Mammary epithelial cell (primary cell): ENCODE measurements at regions of chr21 and their contacts with region 1.

Region 1: GRCh38 chr21:28336314-28336713 is 656.4 kb downstream of the LTN1 start:
- DNase-seq: peak; percentile 29
- H3K4me3 ChIP-seq: no peak overlapping the region
- H3K27ac ChIP-seq: no peak overlapping the region
- H3K4me1 ChIP-seq: no peaks in the 10 kb centered on the region
- H3K27me3 ChIP-seq: no peaks in the 10 kb centered on the region
- CTCF ChIP-seq: peak; percentile 46 to 51

Region 2: GRCh38 chr21:26842976-26843932 is 1493.1 kb before region 1 on chr21:
- CTCF ChIA-PET with region 1: no interaction called
- dilution Hi-C with region 1: no loop called
- in situ Hi-C with region 1: loop called in 1 of 2 experiments (anchors 10 kb)
- intact Hi-C with region 1: no loop called
- DNase-seq: peak; percentile 91
- H3K4me3 ChIP-seq: peak overlapping the region; percentile 70 to 85 (median 74)
- H3K27ac ChIP-seq: peak overlapping the region; percentile 80
- H3K4me1 ChIP-seq: peaks cover 27% of the 10 kb centered on the region
- H3K27me3 ChIP-seq: no peaks in the 10 kb centered on the region
- CTCF ChIP-seq: peak in 1 of 2 donors; percentile 29

Region 3: DNA sequence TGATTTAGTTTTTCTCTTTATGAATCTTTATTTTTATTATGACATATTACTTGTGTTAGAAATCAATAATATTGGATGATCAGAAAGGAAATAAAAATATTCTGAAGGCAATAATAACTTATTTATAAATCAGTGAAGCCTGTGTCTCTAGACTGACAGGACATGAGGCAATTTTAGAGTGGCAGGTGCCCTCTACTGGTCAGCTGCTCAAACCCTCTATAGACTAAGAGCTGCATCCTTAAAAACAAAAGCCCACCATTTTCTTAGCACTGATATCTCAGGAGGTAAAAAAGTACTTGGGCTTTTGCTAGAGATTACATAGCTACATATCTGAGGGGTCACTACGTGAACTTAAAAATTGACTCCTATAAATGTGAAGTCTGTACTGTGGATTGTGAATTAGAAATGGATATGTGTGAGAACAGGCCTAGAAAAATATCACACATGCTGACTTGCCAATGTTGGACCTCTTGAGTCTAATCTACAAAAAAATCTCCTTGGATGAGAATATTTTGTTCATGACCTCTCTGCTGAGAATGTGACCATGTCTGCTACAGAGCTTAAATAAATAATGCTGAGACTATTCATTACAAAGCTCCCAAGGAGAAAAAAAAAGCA is 771.5 kb before region 1 on chr21:
- CTCF ChIA-PET with region 1: no interaction called
- dilution Hi-C with region 1: no loop called
- in situ Hi-C with region 1: no loop called
- intact Hi-C with region 1: loop called (anchors 2 kb)
- DNase-seq: peak; percentile 42
- H3K4me3 ChIP-seq: no peak overlapping the region
- H3K27ac ChIP-seq: no peak overlapping the region
- H3K4me1 ChIP-seq: peaks cover 12% of the 10 kb centered on the region
- H3K27me3 ChIP-seq: no peaks in the 10 kb centered on the region
- CTCF ChIP-seq: peak; percentile 62 to 86

Region 4: GRCh38 chr21:27700974-27701614 is 635.2 kb before region 1 on chr21:
- CTCF ChIA-PET with region 1: no interaction called
- dilution Hi-C with region 1: no loop called
- in situ Hi-C with region 1: loop called in 1 of 2 experiments (anchors 25 kb)
- intact Hi-C with region 1: loop called (anchors 1 kb)
- DNase-seq: peak; percentile 77
- H3K4me3 ChIP-seq: no peak overlapping the region
- H3K27ac ChIP-seq: no peak overlapping the region
- H3K4me1 ChIP-seq: no peaks in the 10 kb centered on the region
- H3K27me3 ChIP-seq: no peaks in the 10 kb centered on the region
- CTCF ChIP-seq: peak; percentile 76 to 92

Region 5: GRCh38 chr21:28099001-28099705 is 237.2 kb before region 1 on chr21:
- CTCF ChIA-PET with region 1: no interaction called
- dilution Hi-C with region 1: no loop called
- in situ Hi-C with region 1: loop called in 1 of 2 experiments (anchors 25 kb)
- intact Hi-C with region 1: no loop called
- DNase-seq: no peak
- H3K4me3 ChIP-seq: no peak overlapping the region
- H3K27ac ChIP-seq: no peak overlapping the region
- H3K4me1 ChIP-seq: no peaks in the 10 kb centered on the region
- H3K27me3 ChIP-seq: no peaks in the 10 kb centered on the region
- CTCF ChIP-seq: no peak

Region 6: GRCh38 chr21:28308516-28308915 is 27.8 kb before region 1 on chr21:
- CTCF ChIA-PET with region 1: interaction called, 21 read pairs
- dilution Hi-C with region 1: no loop called
- in situ Hi-C with region 1: no loop called
- intact Hi-C with region 1: no loop called
- DNase-seq: peak; percentile 58
- H3K4me3 ChIP-seq: no peak overlapping the region
- H3K27ac ChIP-seq: no peak overlapping the region
- H3K4me1 ChIP-seq: peaks cover 5% of the 10 kb centered on the region
- H3K27me3 ChIP-seq: no peaks in the 10 kb centered on the region
- CTCF ChIP-seq: no peak

Region 7: GRCh38 chr21:28737674-28738419 is 401.5 kb after region 1 on chr21:
- CTCF ChIA-PET with region 1: interaction called, 11 read pairs
- dilution Hi-C with region 1: no loop called
- in situ Hi-C with region 1: loop called in 1 of 2 experiments (anchors 10 kb)
- intact Hi-C with region 1: no loop called
- DNase-seq: peak; percentile 30
- H3K4me3 ChIP-seq: no peak overlapping the region
- H3K27ac ChIP-seq: no peak overlapping the region
- H3K4me1 ChIP-seq: peaks cover 18% of the 10 kb centered on the region
- H3K27me3 ChIP-seq: no peaks in the 10 kb centered on the region
- CTCF ChIP-seq: no peak